ENCODE measurements at regions of chr20 and their contacts with region 1.

Region 1: GRCh38 chr20:52127309-52127708 is 64.3 kb downstream of the ZFP64 start:
- DNase-seq: no peak
- ATAC-seq: no peak
- H3K4me3 ChIP-seq: no peak overlapping the region
- H3K27ac ChIP-seq: no peak overlapping the region
- H3K4me1 ChIP-seq: no peaks in the 10 kb centered on the region; the same call in 1 of the 2 replicates
- H3K27me3 ChIP-seq: no peaks in the 10 kb centered on the region
- CTCF ChIP-seq: no peak
- POLR2A ChIP-seq: no peak
- RAD21 ChIP-seq: no peak

Region 2: DNA sequence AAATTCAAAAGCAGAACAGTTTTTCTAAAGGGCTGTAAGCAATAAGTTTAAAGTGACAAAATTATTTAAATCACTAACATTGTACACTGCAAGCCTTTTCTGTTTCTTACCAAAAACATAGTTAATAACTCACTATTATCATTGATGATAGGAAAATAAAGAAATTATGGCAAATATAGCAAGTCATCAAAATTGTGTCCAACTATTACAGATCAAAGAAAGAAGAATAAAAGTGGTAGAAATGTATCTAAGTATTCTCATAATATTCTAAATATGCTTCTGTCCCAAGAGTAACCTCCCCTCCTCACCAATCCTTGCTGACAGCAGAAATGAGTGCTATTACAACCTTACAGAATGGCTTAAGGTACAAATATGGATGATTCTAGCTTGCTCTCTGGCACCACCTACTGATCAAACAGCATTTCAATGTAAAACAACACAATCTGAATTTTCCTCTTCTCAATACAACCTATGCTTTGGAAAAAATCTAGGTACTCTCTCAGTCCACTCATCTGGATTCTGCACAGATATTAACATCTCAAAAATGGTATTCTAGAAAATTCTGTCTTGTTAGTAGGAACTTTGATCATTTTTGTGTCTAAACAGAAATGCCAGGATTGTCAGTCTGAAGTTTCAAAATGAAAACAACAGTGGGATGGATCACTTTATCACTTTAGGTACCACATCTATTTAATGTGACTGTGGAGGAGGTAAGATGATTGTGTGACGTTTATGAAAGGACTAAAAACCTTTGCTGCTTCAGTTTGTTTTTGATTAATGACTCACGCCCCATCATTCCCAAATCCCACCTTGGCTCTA is 23.3 kb after region 1 on chr20:
- CTCF ChIA-PET with region 1: interaction called, 7 read pairs
- POLR2A ChIA-PET with region 1: no interaction called
- dilution Hi-C with region 1: no loop called
- in situ Hi-C with region 1: no loop called
- intact Hi-C with region 1: loop called (anchors 1 kb)
- DNase-seq: peak; percentile 58
- ATAC-seq: peak; percentile 88
- H3K4me3 ChIP-seq: no peak overlapping the region
- H3K27ac ChIP-seq: no peak overlapping the region
- H3K4me1 ChIP-seq: no peaks in the 10 kb centered on the region
- H3K27me3 ChIP-seq: no peaks in the 10 kb centered on the region
- CTCF ChIP-seq: peak; percentile 71
- POLR2A ChIP-seq: no peak
- RAD21 ChIP-seq: peak; percentile 69

Measured in IMR-90 (cell line).